Calu3 (cell line): ENCODE measurements at regions of chr13 and their contacts with region 1.

Region 1: DNA sequence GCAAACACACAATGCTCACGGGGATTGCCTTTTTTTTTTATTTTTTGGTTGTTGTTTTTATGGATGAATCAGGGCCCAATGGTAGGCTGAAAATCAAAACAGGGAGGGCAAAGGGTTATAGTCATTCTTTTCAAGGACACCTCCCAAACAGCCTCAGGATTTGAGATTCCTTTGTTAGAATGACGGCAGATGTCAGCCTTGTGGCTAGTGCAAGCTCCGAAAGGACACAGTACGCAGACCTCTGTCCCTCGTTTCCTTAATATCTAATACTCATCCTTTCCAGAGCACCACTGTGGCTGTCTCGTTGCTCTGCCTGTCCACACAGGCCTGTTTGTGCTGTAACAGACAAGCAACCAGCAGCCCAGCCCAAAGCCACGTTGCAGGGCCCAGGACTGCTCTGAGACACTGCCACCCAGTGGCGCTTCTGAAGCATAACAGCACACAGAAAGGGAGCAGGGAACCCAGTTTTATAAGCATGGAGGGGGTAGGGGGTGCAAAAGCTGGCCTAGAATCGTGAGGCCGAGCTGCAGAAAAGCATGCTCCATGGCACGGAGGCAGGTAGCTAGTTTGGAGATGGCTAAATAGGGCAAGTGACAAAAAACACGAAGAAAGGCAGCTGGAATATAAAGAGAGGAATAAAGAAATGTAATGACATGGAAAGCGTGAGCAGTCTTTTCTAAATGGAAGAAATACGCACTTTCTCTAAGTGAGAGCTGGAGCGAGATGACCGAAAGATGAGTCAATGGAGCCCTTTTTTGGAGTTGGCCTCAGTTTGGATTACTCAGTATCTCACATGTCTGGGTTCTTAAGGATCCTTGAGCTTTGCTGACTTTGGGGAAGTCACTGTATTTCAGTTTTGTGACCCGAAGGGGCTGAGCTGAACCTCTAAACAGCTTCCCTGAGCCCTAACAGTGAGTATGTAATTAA is 40.7 kb upstream of the MEDAG start:
- DNase-seq: peak; percentile 54
- H3K4me3 Mint-ChIP-seq: no peak overlapping the region
- H3K27ac Mint-ChIP-seq: peak overlapping the region; percentile 46
- H3K4me1 Mint-ChIP-seq: peaks cover 29% of the 10 kb centered on the region
- H3K27me3 Mint-ChIP-seq: no peaks in the 10 kb centered on the region
- CTCF ChIP-seq: peak; percentile 68

Region 2: DNA sequence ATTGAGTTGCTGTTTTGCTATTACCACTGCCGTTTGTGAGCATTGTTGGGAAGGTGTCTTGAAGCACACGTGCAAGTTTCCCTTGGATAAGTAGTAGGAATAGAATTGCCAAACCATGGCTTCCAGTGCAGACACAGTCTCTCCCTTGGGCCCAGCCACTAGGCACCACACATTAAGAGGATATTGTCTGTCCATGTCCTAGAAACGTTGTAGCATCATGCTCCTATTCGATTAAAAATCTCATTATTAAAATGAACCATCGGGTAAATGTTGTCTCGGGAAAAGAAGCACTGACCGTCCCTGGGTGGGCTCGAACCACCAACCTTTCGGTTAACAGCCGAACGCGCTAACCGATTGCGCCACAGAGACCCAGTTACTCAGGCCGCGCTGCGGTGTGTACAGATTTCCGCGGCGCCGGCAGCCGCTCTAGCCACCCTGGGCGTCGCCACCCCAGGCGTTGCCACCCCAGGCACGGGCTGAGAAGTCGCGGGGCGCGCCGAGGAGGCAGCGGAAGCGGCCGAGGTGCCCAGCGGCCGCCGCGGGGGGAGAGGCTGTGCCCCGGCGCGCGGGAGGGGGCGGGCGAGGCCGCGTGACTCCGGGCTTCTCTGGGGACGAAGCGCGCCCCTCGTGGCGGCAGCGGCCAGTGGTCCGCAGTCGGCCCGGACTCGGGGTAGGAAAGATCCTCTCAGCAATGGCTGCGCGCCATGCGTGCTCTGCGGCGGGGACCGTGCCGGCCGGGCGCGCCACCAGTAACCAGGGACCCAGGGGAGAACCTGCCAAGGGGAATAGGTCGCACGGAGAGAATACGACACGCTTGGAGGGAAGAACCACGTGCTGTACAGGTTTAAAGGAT is 191.5 kb before region 1 on chr13:
- CTCF ChIA-PET with region 1: no interaction called
- intact Hi-C with region 1: loop called (anchors 10 kb)
- DNase-seq: peak; percentile 88
- H3K4me3 Mint-ChIP-seq: peak overlapping the region; percentile 70
- H3K27ac Mint-ChIP-seq: peak overlapping the region; percentile 75
- H3K4me1 Mint-ChIP-seq: no peaks in the 10 kb centered on the region
- H3K27me3 Mint-ChIP-seq: no peaks in the 10 kb centered on the region
- CTCF ChIP-seq: no peak

Region 3: DNA sequence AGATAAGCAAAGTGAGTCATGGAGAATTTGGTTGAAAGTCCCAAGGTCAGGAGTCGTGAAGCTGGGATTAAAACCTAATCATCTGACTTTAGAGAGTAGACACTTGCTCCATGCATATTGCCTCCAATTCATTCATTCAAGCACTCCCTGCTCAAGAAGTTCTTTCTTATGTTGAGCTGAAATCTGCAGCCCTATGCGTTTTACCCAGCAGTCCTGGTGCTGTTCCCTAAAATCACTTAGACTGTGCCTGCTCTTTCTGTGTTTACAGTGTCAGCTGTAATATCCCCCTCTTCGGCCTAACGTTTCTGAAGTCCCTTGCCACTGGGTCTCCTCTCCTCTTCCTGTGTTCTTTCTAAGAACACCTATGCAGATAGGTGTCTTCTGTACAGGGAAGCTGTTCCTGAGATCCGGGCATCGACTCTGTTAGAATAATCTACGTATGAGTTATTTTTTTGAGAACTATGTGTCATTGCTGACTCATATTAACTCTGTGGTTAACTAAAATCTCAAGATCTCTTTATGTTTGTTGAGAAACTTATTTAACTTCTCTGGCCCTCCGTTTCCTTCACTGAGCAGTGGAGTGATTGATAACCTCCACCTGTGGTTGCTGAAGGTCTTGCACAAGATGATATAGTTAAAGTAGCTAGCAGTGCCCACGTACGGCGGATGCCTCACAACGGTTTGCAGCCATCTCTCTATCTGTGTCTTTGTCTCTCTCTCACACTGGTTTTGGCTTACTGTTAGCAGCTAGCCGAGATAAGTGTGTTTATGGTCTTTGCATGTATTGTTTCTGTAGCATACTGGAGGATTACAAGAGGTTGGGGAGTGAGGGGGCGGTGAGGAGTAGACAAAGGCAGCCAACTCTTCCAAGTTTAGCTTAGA is 125.4 kb before region 1 on chr13:
- CTCF ChIA-PET with region 1: no interaction called
- intact Hi-C with region 1: loop called (anchors 5 kb)
- DNase-seq: peak; percentile 3
- H3K4me3 Mint-ChIP-seq: peak overlapping the region; percentile 56
- H3K27ac Mint-ChIP-seq: peak overlapping the region; percentile 8
- H3K4me1 Mint-ChIP-seq: peaks cover 38% of the 10 kb centered on the region
- H3K27me3 Mint-ChIP-seq: no peaks in the 10 kb centered on the region
- CTCF ChIP-seq: no peak

Region 4: DNA sequence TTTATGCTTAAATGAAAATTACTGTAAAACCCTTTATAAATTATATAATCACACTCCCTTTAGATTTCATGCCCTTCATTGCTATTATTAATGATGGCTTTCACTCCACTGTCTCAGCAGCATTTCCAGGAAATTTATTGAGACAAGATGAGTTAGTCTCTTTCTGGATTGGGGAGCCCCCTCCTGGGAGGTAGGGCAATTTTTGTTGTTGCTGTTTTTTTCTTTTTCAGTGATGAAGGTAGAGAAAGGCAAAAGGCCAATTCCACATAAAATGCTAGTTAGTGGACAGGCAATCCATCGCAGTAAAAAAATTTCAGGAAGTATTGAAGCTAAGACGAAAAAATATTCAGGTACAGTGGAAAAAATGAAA is 147.3 kb after region 1 on chr13:
- CTCF ChIA-PET with region 1: no interaction called
- intact Hi-C with region 1: loop called (anchors 10 kb)
- DNase-seq: peak; percentile 26
- H3K4me3 Mint-ChIP-seq: no peak overlapping the region
- H3K27ac Mint-ChIP-seq: no peak overlapping the region
- H3K4me1 Mint-ChIP-seq: no peaks in the 10 kb centered on the region
- H3K27me3 Mint-ChIP-seq: peaks cover 7% of the 10 kb centered on the region
- CTCF ChIP-seq: no peak

Region 5: GRCh38 chr13:31919971-31920726 is 1054.8 kb after region 1 on chr13:
- CTCF ChIA-PET with region 1: no interaction called
- intact Hi-C with region 1: no loop called
- DNase-seq: no peak
- H3K4me3 Mint-ChIP-seq: no peak overlapping the region
- H3K27ac Mint-ChIP-seq: no peak overlapping the region
- H3K4me1 Mint-ChIP-seq: peaks cover 9% of the 10 kb centered on the region
- H3K27me3 Mint-ChIP-seq: no peaks in the 10 kb centered on the region
- CTCF ChIP-seq: no peak